ENCODE measurements at regions of chr9 and their contacts with region 1.

Region 1: GRCh38 chr9:35882263-35882848 is 12.2 kb upstream of the OR13J1 start:
- DNase-seq: peak; percentile 68 to 90 (median 78)
- ATAC-seq: peak; percentile 64
- H3K4me3 ChIP-seq: no peak overlapping the region
- H3K4me3 Mint-ChIP-seq: no peak overlapping the region
- H3K27ac ChIP-seq: no peak overlapping the region
- H3K27ac Mint-ChIP-seq: no peak overlapping the region
- H3K4me1 ChIP-seq: no peaks in the 10 kb centered on the region
- H3K4me1 Mint-ChIP-seq: no peaks in the 10 kb centered on the region
- H3K27me3 ChIP-seq: no peaks in the 10 kb centered on the region
- H3K27me3 Mint-ChIP-seq: peaks cover 13% of the 10 kb centered on the region
- CTCF ChIP-seq: peak; percentile 98

Region 2: GRCh38 chr9:35481347-35481975 is 400.9 kb before region 1 on chr9:
- CTCF ChIA-PET with region 1: no interaction called
- POLR2A ChIA-PET with region 1: no interaction called
- intact Hi-C with region 1: loop called (anchors 5 to 10 kb)
- DNase-seq: peak in 5 of 14 experiments; percentile 11 to 46 (median 25)
- ATAC-seq: peak; percentile 63
- H3K4me3 ChIP-seq: no peak overlapping the region
- H3K4me3 Mint-ChIP-seq: no peak overlapping the region
- H3K27ac ChIP-seq: no peak overlapping the region
- H3K27ac Mint-ChIP-seq: no peak overlapping the region
- H3K4me1 ChIP-seq: no peaks in the 10 kb centered on the region
- H3K4me1 Mint-ChIP-seq: no peaks in the 10 kb centered on the region
- H3K27me3 ChIP-seq: peaks cover 5 to 8% of the 10 kb centered on the region in 2 experiments
- H3K27me3 Mint-ChIP-seq: peaks cover 15% of the 10 kb centered on the region
- CTCF ChIP-seq: peak; percentile 31

Region 3: GRCh38 chr9:35489313-35490154 is 392.8 kb before region 1 on chr9 and contains the start of gene RUSC2:
- CTCF ChIA-PET with region 1: no interaction called
- POLR2A ChIA-PET with region 1: no interaction called
- intact Hi-C with region 1: loop called (anchors 5 to 10 kb)
- DNase-seq: peak in 12 of 14 experiments; percentile 14 to 73 (median 38)
- ATAC-seq: peak; percentile 72
- H3K4me3 ChIP-seq: peak within 1 kb of the TSS; percentile 49
- H3K4me3 Mint-ChIP-seq: peak within 1 kb of the TSS; percentile 84
- H3K27ac ChIP-seq: no peak within 1 kb of the TSS
- H3K27ac Mint-ChIP-seq: peak within 1 kb of the TSS; percentile 68
- H3K4me1 ChIP-seq: peaks cover 15% of the 10 kb centered on the region
- H3K4me1 Mint-ChIP-seq: peaks cover 31% of the 10 kb centered on the region
- H3K27me3 ChIP-seq: peaks cover 12 to 13% of the 10 kb centered on the region in 2 experiments
- H3K27me3 Mint-ChIP-seq: peaks cover 14% of the 10 kb centered on the region
- CTCF ChIP-seq: peak; percentile 55
- total RNA-seq, gene RUSC2: 1.6 to 1.8 TPM

Region 4: GRCh38 chr9:35790385-35791296 is 91.7 kb before region 1 on chr9:
- CTCF ChIA-PET with region 1: interaction called, 32 read pairs
- POLR2A ChIA-PET with region 1: interaction called, 3 read pairs
- intact Hi-C with region 1: loop called (anchors 1 kb)
- DNase-seq: peak; percentile 32 to 84 (median 44)
- ATAC-seq: peak; percentile 97
- H3K4me3 ChIP-seq: no peak overlapping the region
- H3K4me3 Mint-ChIP-seq: no peak overlapping the region
- H3K27ac ChIP-seq: no peak overlapping the region
- H3K27ac Mint-ChIP-seq: no peak overlapping the region
- H3K4me1 ChIP-seq: peaks cover 5% of the 10 kb centered on the region
- H3K4me1 Mint-ChIP-seq: peaks cover 7% of the 10 kb centered on the region
- H3K27me3 ChIP-seq: no peaks in the 10 kb centered on the region
- H3K27me3 Mint-ChIP-seq: no peaks in the 10 kb centered on the region
- CTCF ChIP-seq: peak; percentile 89

Region 5: GRCh38 chr9:35829084-35829763 is 53.1 kb before region 1 on chr9 and contains the start of gene TMEM8B:
- CTCF ChIA-PET with region 1: interaction called, 12 read pairs
- POLR2A ChIA-PET with region 1: interaction called, 3 read pairs
- intact Hi-C with region 1: loop called (anchors 5 kb)
- DNase-seq: peak; percentile 89 to 98 (median 94)
- ATAC-seq: peak; percentile 94
- H3K4me3 ChIP-seq: peak within 1 kb of the TSS; percentile 92
- H3K4me3 Mint-ChIP-seq: peak within 1 kb of the TSS; percentile 97
- H3K27ac ChIP-seq: peak within 1 kb of the TSS; percentile 44 to 47
- H3K27ac Mint-ChIP-seq: peak within 1 kb of the TSS; percentile 83
- H3K4me1 ChIP-seq: peaks cover 35% of the 10 kb centered on the region
- H3K4me1 Mint-ChIP-seq: peaks cover 40% of the 10 kb centered on the region
- H3K27me3 ChIP-seq: no peaks in the 10 kb centered on the region
- H3K27me3 Mint-ChIP-seq: no peaks in the 10 kb centered on the region
- CTCF ChIP-seq: no peak
- total RNA-seq, gene TMEM8B: 8.9 to 9.6 TPM

Region 6: GRCh38 chr9:35863583-35863982 is 18.8 kb before region 1 on chr9:
- CTCF ChIA-PET with region 1: no interaction called
- POLR2A ChIA-PET with region 1: no interaction called
- intact Hi-C with region 1: no loop called
- DNase-seq: no peak
- ATAC-seq: no peak
- H3K4me3 ChIP-seq: no peak overlapping the region
- H3K4me3 Mint-ChIP-seq: no peak overlapping the region
- H3K27ac ChIP-seq: no peak overlapping the region
- H3K27ac Mint-ChIP-seq: no peak overlapping the region
- H3K4me1 ChIP-seq: no peaks in the 10 kb centered on the region
- H3K4me1 Mint-ChIP-seq: no peaks in the 10 kb centered on the region
- H3K27me3 ChIP-seq: peaks cover 0 to 3% of the 10 kb centered on the region in 2 experiments
- H3K27me3 Mint-ChIP-seq: peaks cover 30% of the 10 kb centered on the region
- CTCF ChIP-seq: no peak

Measured in CD4-positive, alpha-beta T cell (primary cell).